ENCODE measurements at regions of chr14 and their contacts with region 1.

Region 1: GRCh38 chr14:100192672-100193416 is 33.4 kb upstream of the DEGS2 start:
- DNase-seq: peak; percentile 100
- ATAC-seq: peak; percentile 99

Region 2: DNA sequence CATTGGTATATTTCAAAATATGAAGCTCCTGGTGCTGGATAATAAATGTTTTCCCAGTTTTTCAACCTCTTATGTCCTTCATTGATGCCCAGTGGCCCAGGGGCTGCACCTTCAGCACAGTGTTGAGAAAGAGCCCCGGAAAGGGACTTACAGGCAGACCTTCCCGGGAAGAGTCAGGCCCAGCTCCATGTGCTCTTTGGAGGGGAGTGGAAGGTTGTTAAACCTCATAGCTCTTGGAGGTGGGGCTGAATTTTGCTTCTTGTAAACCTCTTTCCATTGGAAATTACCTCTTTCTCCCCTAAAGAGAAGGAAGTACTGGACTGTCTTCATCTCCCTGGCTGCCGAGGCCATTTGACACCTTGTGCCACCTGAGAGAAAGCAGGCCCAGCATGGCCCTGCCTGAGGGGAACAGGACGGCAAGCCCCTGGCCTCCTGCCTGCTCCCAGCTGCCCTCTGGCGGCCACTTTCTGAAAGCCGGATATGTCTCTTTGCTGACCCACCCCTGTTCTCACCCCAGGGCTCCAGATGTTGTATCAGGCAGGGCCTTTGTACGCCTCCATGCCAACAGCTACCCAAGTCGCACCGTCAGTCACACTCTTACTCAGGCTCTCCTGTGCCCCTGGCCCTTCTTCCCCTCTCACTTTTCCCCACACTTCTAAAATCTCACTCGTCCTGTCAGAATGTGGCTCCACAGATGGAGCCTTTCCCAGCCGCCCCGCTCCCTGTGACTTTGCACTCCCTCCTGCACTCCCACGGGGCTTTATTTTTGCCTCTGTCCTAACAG is 84.6 kb before region 1 on chr14:
- intact Hi-C with region 1: loop called in 1 of 2 experiments (anchors 5 kb)
- DNase-seq: peak; percentile 88
- ATAC-seq: peak; percentile 78 to 87